A549 (cell line): ENCODE measurements at regions of chr2 and their contacts with region 1.

Region 1: DNA sequence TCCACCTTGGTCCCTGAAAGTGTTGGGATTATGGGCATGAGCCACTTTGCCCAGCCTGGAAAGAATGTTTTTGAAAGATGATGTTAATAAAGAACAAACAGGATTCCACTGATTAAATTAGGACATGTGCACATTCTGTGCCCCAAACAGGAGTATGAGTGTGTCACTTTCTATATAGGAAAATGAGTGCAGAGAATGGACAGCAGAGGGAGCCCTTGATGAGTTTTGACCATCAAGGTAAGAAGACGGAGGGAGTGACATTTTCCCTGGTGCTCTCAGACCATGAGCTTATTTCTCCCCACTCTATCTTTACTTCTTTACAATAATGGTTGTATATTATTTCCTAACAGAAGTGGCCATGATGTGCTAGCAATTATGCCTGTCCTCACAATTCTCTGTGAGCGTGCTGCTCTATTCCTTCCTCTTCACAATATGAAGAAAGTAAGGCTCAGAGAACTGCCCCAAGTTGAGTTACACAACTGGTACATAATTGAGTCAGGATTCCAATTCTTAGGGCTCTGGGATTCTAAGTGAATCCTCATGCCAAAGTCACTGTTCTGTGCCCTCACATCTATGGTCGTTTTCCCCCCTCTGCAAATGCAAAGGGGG is 20.6 kb downstream of the RPL37A start:
- DNase-seq: peak; percentile 52 to 73
- ATAC-seq: peak; percentile 72 to 93; a peak in 5 of 6 replicates
- H3K4me3 ChIP-seq: no peak overlapping the region
- H3K27ac ChIP-seq: no peak overlapping the region
- H3K4me1 ChIP-seq: no peaks in the 10 kb centered on the region
- CTCF ChIP-seq: peak; percentile 82
- EP300 ChIP-seq: no peak
- POLR2A ChIP-seq: no peak
- RAD21 ChIP-seq: peak; percentile 73 to 74

Region 2: GRCh38 chr2:216391401-216391800 is 127.9 kb before region 1 on chr2:
- CTCF ChIA-PET with region 1: no interaction called
- POLR2A ChIA-PET with region 1: no interaction called
- DNase-seq: no peak
- ATAC-seq: no peak
- H3K4me3 ChIP-seq: no peak overlapping the region
- H3K27ac ChIP-seq: 0 out of 6 replicates have a peak overlapping the region, but pooled peaks of 1 of the 2 experiments have one; percentile 33
- H3K4me1 ChIP-seq: 0 out of 3 replicates have a peak, but pooled peaks cover 4% of the 10 kb centered on the region
- CTCF ChIP-seq: no peak
- EP300 ChIP-seq: no peak
- POLR2A ChIP-seq: no peak
- RAD21 ChIP-seq: no peak

Region 3: GRCh38 chr2:216651351-216651881 is 132.2 kb after region 1 on chr2:
- CTCF ChIA-PET with region 1: interaction called, 402 read pairs
- POLR2A ChIA-PET with region 1: no interaction called
- DNase-seq: no peak
- ATAC-seq: no peak
- H3K4me3 ChIP-seq: no peak overlapping the region
- H3K27ac ChIP-seq: no peak overlapping the region
- H3K4me1 ChIP-seq: peaks cover 18% of the 10 kb centered on the region; the same call in 2 of the 3 replicates
- CTCF ChIP-seq: no peak
- EP300 ChIP-seq: no peak
- POLR2A ChIP-seq: no peak
- RAD21 ChIP-seq: no peak

Region 4: GRCh38 chr2:216673609-216674008 is 154.4 kb after region 1 on chr2:
- CTCF ChIA-PET with region 1: interaction called, 402 read pairs
- POLR2A ChIA-PET with region 1: no interaction called
- DNase-seq: no peak
- ATAC-seq: no peak
- H3K4me3 ChIP-seq: no peak overlapping the region
- H3K27ac ChIP-seq: no peak overlapping the region
- H3K4me1 ChIP-seq: no peaks in the 10 kb centered on the region
- CTCF ChIP-seq: no peak
- EP300 ChIP-seq: no peak
- POLR2A ChIP-seq: no peak
- RAD21 ChIP-seq: no peak